Right lobe of liver (tissue), 6 donors: ENCODE measurements at regions of chr19 and their contacts with region 1.

Region 1: DNA sequence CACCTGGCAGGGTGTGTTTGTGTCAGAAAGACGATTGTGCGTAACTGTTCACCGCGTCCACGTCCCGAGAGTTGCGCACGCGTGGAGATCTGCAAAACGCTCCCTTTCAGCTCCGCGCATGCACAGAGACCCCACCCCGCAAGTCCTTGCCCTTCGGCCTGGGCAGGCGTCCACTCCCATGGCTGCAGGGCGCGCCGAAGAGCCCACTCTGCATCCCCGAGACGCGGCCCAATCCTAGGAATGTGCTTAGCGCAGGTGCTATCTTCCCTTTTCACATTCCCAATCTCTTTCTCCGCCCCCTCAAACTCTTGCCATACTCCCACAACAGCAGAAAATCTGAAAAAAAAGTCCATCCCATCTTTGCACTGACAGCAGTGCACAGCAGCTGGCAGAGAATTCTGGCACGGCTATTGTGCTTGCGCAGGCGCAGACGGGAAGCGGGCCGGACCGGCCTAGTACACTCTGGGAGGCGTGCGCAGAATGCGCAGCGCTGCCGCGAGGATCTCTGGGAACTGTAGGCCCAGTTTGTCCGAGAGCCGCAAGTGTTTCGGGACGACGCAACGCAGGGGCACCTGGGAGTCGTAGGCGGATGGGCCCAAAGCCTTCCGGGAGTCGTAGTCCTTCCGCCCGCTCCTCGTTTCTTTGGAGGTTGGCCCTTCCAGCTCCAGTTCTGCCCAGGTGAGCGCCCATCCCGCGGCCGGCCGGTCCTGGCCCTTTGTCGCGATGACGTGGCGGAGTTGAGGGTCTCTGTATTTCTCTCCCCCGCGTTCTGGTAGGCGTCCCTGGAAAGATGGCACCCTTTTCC is 23.1 kb downstream of the ZNF175 start:
- DNase-seq: peak; percentile 99 to 100 (median 99)
- ATAC-seq: peak; percentile 99 to 100 (median 100)
- H3K4me3 ChIP-seq: peak overlapping the region; percentile 30 to 62 (median 60)
- H3K27ac ChIP-seq: no peak overlapping the region
- H3K4me1 ChIP-seq: peaks cover 0 to 12% (median 3%) of the 10 kb centered on the region in 4 donors
- H3K27me3 ChIP-seq: no peaks in the 10 kb centered on the region
- CTCF ChIP-seq: no peak
- POLR2A ChIP-seq: no peak

Region 2: GRCh38 chr19:51108066-51108804 is 485.9 kb before region 1 on chr19 and contains the start of gene CTU1:
- intact Hi-C with region 1: loop called (anchors 5 to 10 kb)
- DNase-seq: peak; percentile 97 to 99 (median 99)
- ATAC-seq: peak; percentile 98 to 99 (median 98)
- H3K4me3 ChIP-seq: peak within 1 kb of the TSS; percentile 71 to 94 (median 73)
- H3K27ac ChIP-seq: peak within 1 kb of the TSS in 2 of 3 donors; percentile 11 to 32
- H3K4me1 ChIP-seq: peaks cover 0 to 12% (median 6%) of the 10 kb centered on the region in 4 donors
- H3K27me3 ChIP-seq: no peaks in the 10 kb centered on the region
- CTCF ChIP-seq: peak in 1 of 4 donors; percentile 31
- POLR2A ChIP-seq: peak; percentile 33
- total RNA-seq, gene CTU1: 3.3 to 6.4 (median 3.9) TPM

Region 3: GRCh38 chr19:51628153-51628939 is 34.2 kb after region 1 on chr19:
- intact Hi-C with region 1: no loop called
- DNase-seq: no peak
- ATAC-seq: no peak
- H3K4me3 ChIP-seq: no peak overlapping the region
- H3K27ac ChIP-seq: no peak overlapping the region
- H3K4me1 ChIP-seq: no peaks in the 10 kb centered on the region
- H3K27me3 ChIP-seq: no peaks in the 10 kb centered on the region
- CTCF ChIP-seq: no peak
- POLR2A ChIP-seq: no peak

Region 4: DNA sequence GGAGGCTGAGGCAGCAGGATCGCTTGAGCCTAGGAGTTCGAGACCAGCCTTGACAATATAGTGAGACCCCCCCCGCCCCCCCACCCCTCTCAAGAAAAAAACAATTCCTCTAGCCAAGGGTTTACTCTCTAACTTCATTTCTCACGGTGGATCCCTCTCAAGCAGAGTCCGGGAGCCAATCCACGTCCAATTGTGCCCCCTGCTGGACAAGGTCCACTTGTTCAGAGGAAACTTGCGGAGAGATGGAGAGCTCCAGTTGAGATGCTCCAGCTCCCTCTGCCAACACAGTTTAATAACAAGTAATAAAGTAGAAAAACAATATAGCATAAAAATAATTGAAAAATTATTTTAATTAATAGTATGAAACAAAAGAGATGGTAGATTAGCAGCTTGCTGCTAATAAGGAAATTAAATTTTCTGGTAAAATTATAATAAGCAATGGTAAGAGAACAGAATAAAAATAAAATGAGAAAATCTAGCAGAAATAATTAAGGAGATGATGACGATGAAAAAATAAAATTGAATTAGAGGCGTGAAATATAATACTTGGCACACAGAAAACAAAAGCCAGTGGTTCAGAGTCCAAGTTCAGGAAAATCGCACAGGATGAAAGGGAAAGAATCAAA is 66.9 kb after region 1 on chr19:
- intact Hi-C with region 1: no loop called
- DNase-seq: peak in 2 of 3 donors; percentile 60 to 67
- ATAC-seq: peak in 3 of 4 donors; percentile 60 to 70 (median 66)
- H3K4me3 ChIP-seq: no peak overlapping the region
- H3K27ac ChIP-seq: no peak overlapping the region
- H3K4me1 ChIP-seq: peaks cover 0 to 3% (median 0%) of the 10 kb centered on the region in 4 donors
- H3K27me3 ChIP-seq: no peaks in the 10 kb centered on the region
- CTCF ChIP-seq: peak in 3 of 4 donors; percentile 40 to 55 (median 45)
- POLR2A ChIP-seq: no peak